ENCODE measurements at regions of chr7 and their contacts with region 1.

Region 1: DNA sequence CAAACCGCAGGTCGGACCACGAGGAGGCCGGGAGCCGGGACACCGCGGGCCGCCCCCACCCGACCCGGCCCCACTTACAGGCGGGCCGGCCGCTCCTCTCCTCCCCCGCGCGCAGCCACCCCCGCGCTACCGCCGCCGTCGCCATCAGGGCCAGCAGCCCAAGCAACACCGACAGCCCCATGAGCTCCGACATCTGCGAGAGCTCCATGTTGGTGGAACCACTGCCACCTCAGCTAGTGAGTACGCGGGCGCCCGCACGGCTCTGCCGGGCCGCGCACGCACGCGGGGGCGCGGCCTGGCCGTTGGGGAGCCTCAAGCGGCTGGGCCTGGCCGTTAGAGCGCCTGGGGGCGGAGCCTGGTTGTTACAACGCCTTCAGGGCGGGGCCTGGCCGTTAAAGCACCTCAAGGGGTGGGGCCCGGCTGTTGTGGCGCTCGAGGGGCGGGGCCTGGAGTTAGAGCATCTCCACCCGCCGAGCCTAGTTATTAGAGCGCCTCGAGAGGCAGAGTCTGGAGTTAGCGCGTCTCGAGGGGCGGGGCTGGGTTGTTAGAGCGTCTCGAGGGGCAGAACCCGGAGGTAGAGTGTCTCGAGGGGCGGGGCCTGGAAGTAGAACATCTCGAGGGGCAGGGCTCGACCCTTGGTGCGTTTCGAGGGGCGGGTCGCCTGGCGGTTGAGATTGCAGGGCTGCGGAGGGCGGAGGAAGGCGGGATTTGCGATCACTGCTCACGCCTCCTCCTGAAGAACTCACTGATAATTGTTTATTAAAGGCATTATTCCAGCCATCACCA is at the start of gene TBL2:
- DNase-seq: peak; percentile 99
- H3K4me3 Mint-ChIP-seq: peak within 1 kb of the TSS; percentile 90
- H3K27ac Mint-ChIP-seq: peak within 1 kb of the TSS; percentile 95
- H3K4me1 Mint-ChIP-seq: peaks cover 22% of the 10 kb centered on the region
- H3K27me3 Mint-ChIP-seq: no peaks in the 10 kb centered on the region
- total RNA-seq, gene TBL2: 23.0 to 25.3 TPM

Region 2: DNA sequence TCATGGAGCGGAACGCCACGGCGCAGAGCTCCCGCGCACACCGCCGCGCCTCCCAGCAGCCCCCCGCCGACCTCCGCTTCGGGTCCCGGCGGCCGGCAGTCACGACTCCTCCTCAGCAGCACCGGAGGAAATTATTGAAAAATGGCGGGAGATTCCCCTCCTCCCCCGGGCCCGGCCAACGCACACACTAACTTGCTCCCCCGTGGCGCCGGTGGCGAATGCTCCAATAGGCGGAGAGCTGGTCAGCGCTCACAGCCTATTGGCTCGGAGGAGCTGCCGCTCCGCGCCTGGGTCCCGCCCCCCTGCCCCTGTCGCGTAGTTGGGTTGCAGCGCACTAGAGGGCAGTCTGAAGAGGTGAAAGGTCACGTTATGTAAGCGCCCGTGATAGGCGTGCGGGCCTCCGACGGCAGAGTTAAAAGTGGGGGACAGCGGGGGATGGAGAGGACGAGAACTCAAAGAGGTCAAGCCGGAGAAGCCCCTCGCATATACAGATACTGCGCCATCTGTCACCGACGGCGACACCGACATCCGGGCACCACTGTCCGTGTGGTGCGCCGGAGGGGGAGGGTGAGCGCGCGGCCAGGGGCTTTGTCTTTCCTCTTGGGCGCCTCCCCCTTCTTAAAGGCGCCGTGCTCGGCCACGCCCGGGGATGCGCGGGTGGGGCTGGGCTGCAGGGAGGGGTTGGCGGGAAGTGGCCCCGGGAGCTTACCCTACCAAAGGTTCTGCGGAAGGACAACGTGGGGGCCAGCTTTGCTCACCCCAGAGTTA is 56.2 kb before region 1 on chr7 and contains the start of gene BAZ1B:
- CTCF ChIA-PET with region 1: interaction called, 3 read pairs
- POLR2A ChIA-PET with region 1: interaction called, 18 read pairs
- intact Hi-C with region 1: loop called (anchors 1 kb)
- DNase-seq: peak; percentile 99
- H3K4me3 Mint-ChIP-seq: peak within 1 kb of the TSS; percentile 90
- H3K27ac Mint-ChIP-seq: peak within 1 kb of the TSS; percentile 96
- H3K4me1 Mint-ChIP-seq: peaks cover 52% of the 10 kb centered on the region
- H3K27me3 Mint-ChIP-seq: no peaks in the 10 kb centered on the region
- total RNA-seq, gene BAZ1B: 82.3 to 83.8 TPM

Region 3: DNA sequence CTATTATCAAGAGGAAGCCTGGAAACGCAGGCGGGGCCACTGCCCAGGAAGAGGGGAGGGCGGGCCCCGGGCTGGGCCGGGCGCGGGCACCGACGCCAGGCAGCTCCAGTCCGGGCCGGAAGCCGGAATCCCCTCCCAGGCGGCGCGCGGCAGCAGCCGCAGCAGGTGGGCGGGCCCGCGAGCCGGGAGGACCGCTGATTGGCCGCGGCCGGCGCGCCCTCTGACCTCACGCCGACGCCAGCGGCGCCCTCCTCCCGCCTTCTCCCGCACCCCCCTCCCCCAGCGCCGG is 21.5 kb before region 1 on chr7:
- CTCF ChIA-PET with region 1: interaction called, 5 read pairs
- POLR2A ChIA-PET with region 1: interaction called, 20 read pairs
- intact Hi-C with region 1: loop called (anchors 1 kb)
- DNase-seq: peak; percentile 95
- H3K4me3 Mint-ChIP-seq: peak overlapping the region; percentile 79
- H3K27ac Mint-ChIP-seq: peak overlapping the region; percentile 91
- H3K4me1 Mint-ChIP-seq: peaks cover 34% of the 10 kb centered on the region
- H3K27me3 Mint-ChIP-seq: peaks cover 2% of the 10 kb centered on the region

Region 4: DNA sequence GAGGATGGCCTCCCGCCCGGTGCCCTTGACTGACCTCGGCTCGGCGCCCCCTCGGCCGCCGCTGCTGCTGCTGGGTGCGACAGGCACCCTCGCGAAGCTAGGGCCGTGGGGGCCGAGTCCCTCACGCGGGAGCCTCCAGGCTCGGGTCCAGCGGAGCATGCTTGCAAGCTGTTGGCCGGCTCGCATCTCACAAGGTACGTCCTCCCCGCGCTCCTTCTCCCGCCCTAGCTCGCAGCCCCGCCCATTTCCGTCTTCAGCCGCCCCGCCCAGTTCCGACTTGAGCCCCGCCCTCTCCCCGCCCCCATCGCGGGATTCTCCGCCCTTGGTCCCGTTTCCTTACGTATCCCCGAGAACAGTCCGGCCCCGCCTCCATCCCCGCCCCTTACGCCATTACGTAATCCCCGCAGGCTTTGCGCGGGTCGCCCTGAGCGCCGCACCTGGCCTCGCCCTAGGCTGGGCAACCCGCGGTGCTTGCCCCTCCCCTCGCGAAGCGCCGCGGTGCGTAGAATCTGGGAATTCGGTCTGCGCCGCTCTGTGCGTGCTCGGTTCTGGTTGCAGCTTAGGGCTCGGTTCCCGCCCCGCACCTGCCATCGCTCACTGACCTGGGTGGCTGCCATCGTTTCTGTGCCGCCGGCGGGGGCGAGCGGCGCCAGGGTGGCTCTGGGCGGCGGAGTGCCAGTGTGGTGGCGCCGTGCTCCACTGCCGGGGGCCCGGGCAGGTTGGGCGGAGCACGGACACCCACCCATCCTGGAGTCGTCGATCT is 160.3 kb after region 1 on chr7 and contains the start of gene ABHD11:
- CTCF ChIA-PET with region 1: interaction called, 6 read pairs
- POLR2A ChIA-PET with region 1: interaction called, 6 read pairs
- intact Hi-C with region 1: loop called (anchors 1 kb)
- DNase-seq: peak; percentile 99
- H3K4me3 Mint-ChIP-seq: peak within 1 kb of the TSS; percentile 91
- H3K27ac Mint-ChIP-seq: peak within 1 kb of the TSS; percentile 82
- H3K4me1 Mint-ChIP-seq: peaks cover 13% of the 10 kb centered on the region
- H3K27me3 Mint-ChIP-seq: no peaks in the 10 kb centered on the region
- total RNA-seq, gene ABHD11: 14.7 to 16.8 TPM

Region 5: GRCh38 chr7:74094224-74095101 is 515.9 kb after region 1 on chr7:
- CTCF ChIA-PET with region 1: no interaction called
- POLR2A ChIA-PET with region 1: no interaction called
- intact Hi-C with region 1: loop called (anchors 1 kb)
- DNase-seq: peak; percentile 91
- H3K4me3 Mint-ChIP-seq: peak overlapping the region; percentile 73
- H3K27ac Mint-ChIP-seq: peak overlapping the region; percentile 82
- H3K4me1 Mint-ChIP-seq: peaks cover 17% of the 10 kb centered on the region
- H3K27me3 Mint-ChIP-seq: no peaks in the 10 kb centered on the region

Measured in activated CD4-positive, alpha-beta memory T cell treated with anti-CD3 and anti-CD28 coated beads for 36 hours (primary cell).